ENCODE measurements at regions of chr12 and their contacts with region 1.

Region 1: GRCh38 chr12:65313719-65314317 is 35.3 kb downstream of the MSRB3 start:
- DNase-seq: no peak
- H3K4me3 Mint-ChIP-seq: no peak overlapping the region
- H3K27ac Mint-ChIP-seq: no peak overlapping the region
- H3K4me1 Mint-ChIP-seq: no peaks in the 10 kb centered on the region
- H3K27me3 Mint-ChIP-seq: peaks cover 3% of the 10 kb centered on the region

Region 2: DNA sequence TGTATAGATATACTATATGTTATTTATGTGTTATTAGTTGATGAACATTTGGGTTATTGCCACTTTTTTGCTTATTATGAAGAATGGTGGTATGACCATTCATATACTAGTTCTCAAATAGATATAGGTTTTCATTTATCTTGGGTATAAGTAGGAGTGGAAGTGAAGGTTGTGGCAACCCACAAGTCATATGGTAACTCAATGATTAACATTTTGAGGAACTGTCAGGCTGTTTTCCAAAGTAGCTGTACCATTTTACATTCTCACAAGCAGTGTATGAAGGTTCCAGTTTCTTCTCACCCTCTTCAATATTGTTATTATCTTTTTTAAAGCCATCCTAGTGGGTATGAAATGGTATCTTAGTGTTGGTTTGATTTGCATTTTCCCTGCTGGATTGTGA is 54.3 kb before region 1 on chr12:
- CTCF ChIA-PET with region 1: no interaction called
- POLR2A ChIA-PET with region 1: no interaction called
- intact Hi-C with region 1: no loop called
- DNase-seq: no peak
- H3K4me3 Mint-ChIP-seq: no peak overlapping the region
- H3K27ac Mint-ChIP-seq: no peak overlapping the region
- H3K4me1 Mint-ChIP-seq: no peaks in the 10 kb centered on the region
- H3K27me3 Mint-ChIP-seq: peaks cover 7% of the 10 kb centered on the region

Region 3: GRCh38 chr12:65585648-65586602 is 272.1 kb after region 1 on chr12:
- CTCF ChIA-PET with region 1: no interaction called
- POLR2A ChIA-PET with region 1: no interaction called
- intact Hi-C with region 1: no loop called
- DNase-seq: no peak
- H3K4me3 Mint-ChIP-seq: no peak overlapping the region
- H3K27ac Mint-ChIP-seq: no peak overlapping the region
- H3K4me1 Mint-ChIP-seq: no peaks in the 10 kb centered on the region
- H3K27me3 Mint-ChIP-seq: peaks cover 4% of the 10 kb centered on the region

Region 4: DNA sequence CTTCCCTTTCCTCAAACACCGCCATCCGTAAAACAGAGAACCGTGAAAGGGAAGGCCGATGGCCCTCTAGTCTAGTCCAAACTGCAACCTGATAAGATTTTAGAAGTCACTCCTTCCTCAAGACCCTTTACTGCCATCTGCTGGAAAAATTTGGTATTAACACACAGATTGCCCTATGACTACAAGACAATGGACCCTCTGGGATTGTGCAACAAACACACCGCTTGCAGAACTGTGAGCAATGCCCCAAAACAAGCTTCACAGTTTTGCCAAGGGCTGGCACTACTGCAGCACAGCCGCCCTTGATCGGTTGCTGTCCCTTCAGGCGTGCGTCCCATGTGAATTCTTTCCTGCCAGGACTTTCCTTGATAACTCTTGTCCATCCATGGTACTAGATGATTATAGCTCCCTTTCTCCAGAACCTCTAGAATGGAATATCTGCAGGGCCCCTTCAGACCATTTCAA is 793.7 kb after region 1 on chr12:
- CTCF ChIA-PET with region 1: interaction called, 3 read pairs
- POLR2A ChIA-PET with region 1: no interaction called
- intact Hi-C with region 1: loop called (anchors 5 kb)
- DNase-seq: peak; percentile 21
- H3K4me3 Mint-ChIP-seq: no peak overlapping the region
- H3K27ac Mint-ChIP-seq: no peak overlapping the region
- H3K4me1 Mint-ChIP-seq: peaks cover 2% of the 10 kb centered on the region
- H3K27me3 Mint-ChIP-seq: peaks cover 10% of the 10 kb centered on the region

Measured in activated CD4-positive, alpha-beta memory T cell treated with anti-CD3 and anti-CD28 coated beads for 36 hours (primary cell).